Mammary epithelial cell (primary cell): ENCODE measurements at regions of chr15 and their contacts with region 1.

Region 1: GRCh38 chr15:43225201-43225949 is 4.6 kb upstream of the EPB42 start:
- DNase-seq: peak; percentile 58
- H3K4me3 ChIP-seq: no peak overlapping the region
- H3K27ac ChIP-seq: no peak overlapping the region
- H3K4me1 ChIP-seq: no peaks in the 10 kb centered on the region
- H3K27me3 ChIP-seq: no peaks in the 10 kb centered on the region
- CTCF ChIP-seq: peak; percentile 87 to 88

Region 2: DNA sequence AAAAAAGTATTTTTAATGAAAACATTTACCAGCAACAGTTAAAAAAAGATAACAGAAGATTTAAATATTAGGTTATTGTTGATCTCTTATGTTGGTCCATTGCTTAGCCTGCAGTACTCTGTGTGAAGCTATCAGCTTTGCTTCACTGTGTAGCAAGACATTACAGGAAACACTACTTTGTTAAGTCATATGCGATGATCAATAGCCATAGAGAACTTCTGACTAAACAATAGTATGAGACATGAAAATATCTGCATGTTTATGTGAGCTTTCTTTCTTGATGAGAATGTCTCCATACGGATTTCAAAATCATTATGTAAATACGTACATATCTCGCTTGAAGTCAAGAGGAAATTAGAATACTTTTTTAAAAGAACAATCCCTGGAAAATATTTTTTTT is 893.0 kb before region 1 on chr15:
- CTCF ChIA-PET with region 1: no interaction called
- dilution Hi-C with region 1: no loop called
- in situ Hi-C with region 1: no loop called
- intact Hi-C with region 1: no loop called
- DNase-seq: peak; percentile 9
- H3K4me3 ChIP-seq: no peak overlapping the region
- H3K27ac ChIP-seq: no peak overlapping the region
- H3K4me1 ChIP-seq: no peaks in the 10 kb centered on the region
- H3K27me3 ChIP-seq: no peaks in the 10 kb centered on the region
- CTCF ChIP-seq: no peak

Region 3: DNA sequence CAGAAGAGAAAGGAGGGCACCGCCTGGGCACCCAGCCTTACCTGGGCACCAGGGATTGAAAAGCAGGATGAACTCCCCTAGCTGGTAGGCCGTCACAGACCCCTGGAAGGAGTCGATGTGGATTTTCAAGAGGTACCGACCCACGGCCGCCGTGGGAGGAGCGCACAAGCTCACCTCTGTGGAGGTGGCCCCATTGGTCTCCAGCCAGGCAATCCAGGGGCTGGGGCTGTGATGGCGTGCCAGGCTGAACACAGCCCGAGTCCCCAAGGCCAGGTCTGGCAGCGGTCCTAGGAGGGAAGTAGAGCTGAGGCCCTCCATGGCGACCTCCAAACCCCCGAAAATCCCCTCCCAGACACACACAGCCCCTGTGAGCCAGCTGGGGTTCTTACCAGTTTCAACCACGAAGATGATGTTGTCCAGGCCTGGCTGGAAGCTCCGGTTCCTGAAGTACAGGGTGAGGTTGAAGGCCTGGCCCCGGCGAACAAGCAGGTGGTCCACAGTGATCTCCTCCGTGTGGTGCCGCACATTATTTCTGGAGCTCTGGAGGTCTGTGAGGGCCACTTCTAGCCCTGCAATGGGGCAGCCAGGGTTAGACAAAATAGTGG is 34.7 kb after region 1 on chr15:
- CTCF ChIA-PET with region 1: interaction called, 16 read pairs
- dilution Hi-C with region 1: no loop called
- in situ Hi-C with region 1: no loop called
- intact Hi-C with region 1: no loop called
- DNase-seq: no peak
- H3K4me3 ChIP-seq: no peak overlapping the region
- H3K27ac ChIP-seq: no peak overlapping the region
- H3K4me1 ChIP-seq: no peaks in the 10 kb centered on the region
- H3K27me3 ChIP-seq: no peaks in the 10 kb centered on the region
- CTCF ChIP-seq: no peak

Region 4: DNA sequence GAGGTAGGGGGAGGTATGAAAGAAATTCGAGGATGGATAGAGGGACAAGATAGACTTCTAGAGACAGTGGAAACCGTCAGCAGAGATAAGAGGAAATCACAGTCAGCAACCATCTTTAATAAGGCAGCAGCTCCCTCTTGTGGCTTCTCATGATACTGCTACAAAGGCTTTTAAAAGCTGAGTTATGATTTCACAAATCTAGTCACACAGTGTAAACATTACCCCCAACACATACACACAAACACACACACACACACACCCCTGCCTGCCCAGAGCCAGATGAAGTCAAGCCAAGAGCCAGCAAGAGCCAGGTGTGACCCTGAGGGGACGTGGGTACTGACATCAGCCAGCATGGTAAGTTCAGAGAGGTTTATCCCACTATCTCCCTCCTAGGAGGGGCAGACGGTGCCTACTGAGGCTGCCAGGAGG is 60.2 kb after region 1 on chr15:
- CTCF ChIA-PET with region 1: interaction called, 23 read pairs
- dilution Hi-C with region 1: no loop called
- in situ Hi-C with region 1: loop called in 1 of 2 experiments (anchors 5 kb)
- intact Hi-C with region 1: loop called (anchors 1 kb)
- DNase-seq: peak; percentile 46
- H3K4me3 ChIP-seq: no peak overlapping the region
- H3K27ac ChIP-seq: no peak overlapping the region
- H3K4me1 ChIP-seq: no peaks in the 10 kb centered on the region
- H3K27me3 ChIP-seq: no peaks in the 10 kb centered on the region
- CTCF ChIP-seq: peak; percentile 78 to 88